Heart left ventricle (tissue), 16 donors: ENCODE measurements at regions of chr14 and their contacts with region 1.

Region 1: DNA sequence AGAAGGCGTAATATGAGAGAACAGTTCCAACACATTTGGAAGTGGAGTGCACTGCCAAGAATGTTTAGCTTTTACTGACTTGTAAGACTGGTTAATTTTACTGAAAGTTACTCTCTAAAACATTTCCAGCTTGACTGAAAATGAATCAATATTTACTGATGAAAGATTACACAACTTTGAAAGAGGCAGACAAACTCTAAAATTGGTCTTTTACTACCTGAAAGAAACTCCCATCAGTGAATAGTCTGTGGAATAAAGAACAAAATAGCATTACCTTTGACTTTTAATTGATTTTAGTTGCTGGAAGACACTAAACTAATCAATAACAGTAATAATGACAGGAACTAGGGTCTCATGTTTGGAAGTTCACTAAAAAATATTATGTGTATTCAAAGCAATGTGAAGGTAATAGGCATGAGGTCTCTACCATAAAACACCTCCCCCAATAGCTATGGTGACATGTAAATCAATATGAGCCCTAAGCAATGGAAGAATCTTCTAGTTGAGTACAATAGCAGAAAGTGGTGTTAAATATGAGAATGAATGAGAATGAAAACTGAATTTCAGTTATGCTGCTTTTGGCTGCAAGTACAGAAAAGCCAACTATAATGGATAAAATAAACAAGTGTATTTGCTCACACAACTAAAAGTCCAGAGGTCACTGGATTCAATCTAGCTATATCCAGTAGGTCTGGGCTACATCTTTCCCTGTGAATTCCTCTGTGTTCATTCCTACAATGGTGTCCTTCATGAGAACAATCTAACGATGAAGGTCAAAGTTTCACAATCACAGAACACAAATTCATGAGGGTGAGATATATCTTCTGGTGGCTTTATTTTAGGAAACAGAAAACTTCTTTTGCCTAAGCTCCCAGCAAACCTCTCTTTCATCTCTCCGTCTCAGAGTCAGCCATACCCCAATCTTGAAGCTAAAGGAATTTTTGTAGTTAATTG is 728.1 kb downstream of the FSCB start:
- DNase-seq: no peak
- ATAC-seq: no peak
- H3K4me3 ChIP-seq: no peak overlapping the region
- H3K27ac ChIP-seq: no peak overlapping the region
- H3K4me1 ChIP-seq: no peaks in the 10 kb centered on the region
- H3K27me3 ChIP-seq: no peaks in the 10 kb centered on the region
- CTCF ChIP-seq: no peak
- POLR2A ChIP-seq: no peak

Region 2: DNA sequence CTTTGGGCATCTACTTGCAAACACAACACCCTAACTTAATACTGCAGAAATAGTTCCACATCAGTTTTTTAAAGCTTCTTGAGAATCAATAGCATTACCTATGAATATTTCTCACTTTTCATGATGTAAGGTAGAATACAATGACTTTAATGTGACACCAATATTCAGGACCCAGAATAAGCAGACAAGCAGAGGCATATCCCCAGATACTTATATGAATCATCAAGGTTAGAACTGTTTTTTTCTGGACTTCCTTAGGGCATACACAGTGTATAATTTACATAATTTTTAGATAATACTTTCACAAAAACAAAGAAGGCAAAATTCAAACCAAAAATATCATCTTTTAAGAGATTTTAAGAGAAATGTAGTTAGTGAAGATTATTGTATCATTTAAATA is 157.7 kb before region 1 on chr14:
- intact Hi-C with region 1: loop called in 1 of 10 experiments (anchors 10 kb)
- DNase-seq: no peak
- ATAC-seq: no peak
- H3K4me3 ChIP-seq: no peak overlapping the region
- H3K27ac ChIP-seq: no peak overlapping the region
- H3K4me1 ChIP-seq: no peaks in the 10 kb centered on the region
- H3K27me3 ChIP-seq: no peaks in the 10 kb centered on the region
- CTCF ChIP-seq: no peak
- POLR2A ChIP-seq: no peak